CD4-positive, alpha-beta memory T cell (primary cell): ENCODE measurements at regions of chr19 and their contacts with region 1.

Region 1: DNA sequence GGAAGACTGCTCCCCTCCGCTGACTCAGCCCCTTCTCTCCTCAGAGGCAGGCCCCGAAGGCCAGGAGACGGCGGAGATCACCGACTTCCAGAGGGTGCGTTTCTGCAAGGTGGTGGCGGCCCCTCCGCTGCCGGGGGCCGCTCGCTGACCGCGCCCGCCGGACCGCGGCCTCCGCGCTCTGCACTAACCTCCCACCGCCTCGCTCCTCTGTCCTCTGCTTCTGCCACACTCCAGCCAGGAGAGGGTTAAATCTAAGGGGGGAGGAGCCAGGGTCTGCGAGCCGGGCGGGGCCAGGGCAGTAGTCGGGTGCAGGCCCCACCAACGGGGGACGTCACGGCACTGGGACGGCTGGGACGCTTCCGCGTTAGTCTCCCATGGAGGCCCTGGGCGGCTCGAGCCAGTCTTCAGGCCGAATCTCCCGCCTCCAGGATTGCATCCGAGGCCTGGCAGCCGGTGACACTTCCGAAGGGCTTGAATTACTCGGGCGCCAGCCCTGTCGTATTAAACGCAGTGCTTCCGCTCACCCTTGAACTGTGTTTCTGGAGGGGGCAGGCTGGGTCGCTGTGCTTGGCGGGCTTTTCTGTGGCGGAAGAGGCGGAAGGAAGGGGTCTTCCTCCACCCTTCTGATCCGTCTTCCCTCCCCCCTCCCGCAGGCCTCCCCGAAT is 1.2 kb upstream of the INAFM1 start:
- DNase-seq: peak; percentile 87 to 92 (median 89)
- H3K4me3 ChIP-seq: peak overlapping the region; percentile 89 to 100
- H3K4me3 Mint-ChIP-seq: peak overlapping the region; percentile 92 to 99 (median 97)
- H3K27ac ChIP-seq: peak overlapping the region; percentile 96
- H3K27ac Mint-ChIP-seq: peak overlapping the region; percentile 97 to 99 (median 99)
- H3K4me1 ChIP-seq: peaks cover 19% of the 10 kb centered on the region
- H3K4me1 Mint-ChIP-seq: peaks cover 15 to 33% (median 19%) of the 10 kb centered on the region in 4 donors
- H3K27me3 ChIP-seq: no peaks in the 10 kb centered on the region
- H3K27me3 Mint-ChIP-seq: no peaks in the 10 kb centered on the region

Region 2: DNA sequence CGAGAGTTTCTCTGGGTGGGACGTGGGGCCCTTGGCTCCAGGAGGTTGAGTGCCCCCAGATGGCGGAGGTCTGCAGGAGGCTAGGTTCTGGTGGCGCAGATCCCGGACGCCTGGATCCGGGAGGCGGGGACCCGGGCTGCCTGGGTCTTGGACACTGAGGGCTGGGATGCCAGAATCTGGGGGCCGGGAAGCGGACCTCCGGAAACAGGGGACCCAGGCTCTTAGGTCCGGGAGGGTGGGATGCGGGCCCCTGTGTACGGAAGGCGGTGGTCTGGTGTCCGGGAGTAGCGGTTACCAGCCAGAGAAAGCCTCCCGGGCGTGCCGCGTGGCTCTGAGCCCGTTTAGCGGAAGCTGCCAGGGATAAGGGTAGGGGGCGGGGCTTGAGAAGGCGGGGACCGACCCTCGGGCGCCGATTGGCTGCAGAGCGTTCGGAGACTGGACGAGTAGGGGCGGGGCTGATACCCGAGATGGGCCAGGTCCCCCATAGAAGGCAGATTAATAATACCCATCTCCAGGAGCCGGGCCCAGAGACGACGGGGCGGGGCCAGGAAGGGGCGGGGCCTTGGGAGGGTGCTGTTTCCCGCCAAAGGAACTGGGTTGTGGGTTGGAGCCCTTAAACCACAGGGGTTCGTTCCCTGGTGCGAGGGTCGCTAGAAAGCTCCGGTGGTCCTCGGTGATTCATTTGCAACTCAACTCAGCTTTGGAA is 485.0 kb before region 1 on chr19 and contains the start of gene SLC1A5:
- CTCF ChIA-PET with region 1: no interaction called
- POLR2A ChIA-PET with region 1: interaction called, 3 read pairs
- intact Hi-C with region 1: loop called (anchors 1 kb)
- DNase-seq: peak; percentile 95 to 97 (median 95)
- H3K4me3 ChIP-seq: peak within 1 kb of the TSS; percentile 78 to 90
- H3K4me3 Mint-ChIP-seq: peak within 1 kb of the TSS; percentile 89 to 97 (median 92)
- H3K27ac ChIP-seq: peak within 1 kb of the TSS; percentile 75
- H3K27ac Mint-ChIP-seq: peak within 1 kb of the TSS; percentile 80 to 99 (median 90)
- H3K4me1 ChIP-seq: peaks cover 61% of the 10 kb centered on the region
- H3K4me1 Mint-ChIP-seq: peaks cover 42 to 78% (median 56%) of the 10 kb centered on the region in 4 donors
- H3K27me3 ChIP-seq: no peaks in the 10 kb centered on the region
- H3K27me3 Mint-ChIP-seq: no peaks in the 10 kb centered on the region
- total RNA-seq, gene SLC1A5: 20.3 TPM

Region 3: GRCh38 chr19:47081111-47081510 is 192.3 kb before region 1 on chr19:
- CTCF ChIA-PET with region 1: no interaction called
- POLR2A ChIA-PET with region 1: no interaction called
- intact Hi-C with region 1: no loop called
- DNase-seq: no peak
- H3K4me3 ChIP-seq: no peak overlapping the region
- H3K4me3 Mint-ChIP-seq: no peak overlapping the region
- H3K27ac ChIP-seq: no peak overlapping the region
- H3K27ac Mint-ChIP-seq: peak overlapping the region in 1 of 7 donors; percentile 24
- H3K4me1 ChIP-seq: no peaks in the 10 kb centered on the region
- H3K4me1 Mint-ChIP-seq: peaks cover 0 to 4% (median 0%) of the 10 kb centered on the region in 4 donors
- H3K27me3 ChIP-seq: no peaks in the 10 kb centered on the region
- H3K27me3 Mint-ChIP-seq: no peaks in the 10 kb centered on the region

Region 4: GRCh38 chr19:47179653-47180310 is 93.7 kb before region 1 on chr19:
- CTCF ChIA-PET with region 1: no interaction called
- POLR2A ChIA-PET with region 1: no interaction called
- intact Hi-C with region 1: no loop called
- DNase-seq: no peak
- H3K4me3 ChIP-seq: no peak overlapping the region
- H3K4me3 Mint-ChIP-seq: peak overlapping the region in 4 of 8 donors; percentile 15 to 31 (median 25)
- H3K27ac ChIP-seq: no peak overlapping the region
- H3K27ac Mint-ChIP-seq: peak overlapping the region; percentile 48 to 91 (median 70)
- H3K4me1 ChIP-seq: peaks cover 84% of the 10 kb centered on the region
- H3K4me1 Mint-ChIP-seq: peaks cover 52 to 91% (median 68%) of the 10 kb centered on the region in 4 donors
- H3K27me3 ChIP-seq: no peaks in the 10 kb centered on the region
- H3K27me3 Mint-ChIP-seq: no peaks in the 10 kb centered on the region

Region 5: GRCh38 chr19:47225746-47226425 is 47.6 kb before region 1 on chr19:
- CTCF ChIA-PET with region 1: no interaction called
- POLR2A ChIA-PET with region 1: interaction called, 19 read pairs
- intact Hi-C with region 1: loop called (anchors 2 kb)
- DNase-seq: peak; percentile 83 to 87 (median 84)
- H3K4me3 ChIP-seq: peak overlapping the region in 1 of 2 donors; percentile 52
- H3K4me3 Mint-ChIP-seq: peak overlapping the region; percentile 22 to 79 (median 64)
- H3K27ac ChIP-seq: peak overlapping the region; percentile 80
- H3K27ac Mint-ChIP-seq: peak overlapping the region; percentile 74 to 96 (median 89)
- H3K4me1 ChIP-seq: peaks cover 41% of the 10 kb centered on the region
- H3K4me1 Mint-ChIP-seq: peaks cover 5 to 20% (median 11%) of the 10 kb centered on the region in 4 donors
- H3K27me3 ChIP-seq: no peaks in the 10 kb centered on the region
- H3K27me3 Mint-ChIP-seq: no peaks in the 10 kb centered on the region

Region 6: DNA sequence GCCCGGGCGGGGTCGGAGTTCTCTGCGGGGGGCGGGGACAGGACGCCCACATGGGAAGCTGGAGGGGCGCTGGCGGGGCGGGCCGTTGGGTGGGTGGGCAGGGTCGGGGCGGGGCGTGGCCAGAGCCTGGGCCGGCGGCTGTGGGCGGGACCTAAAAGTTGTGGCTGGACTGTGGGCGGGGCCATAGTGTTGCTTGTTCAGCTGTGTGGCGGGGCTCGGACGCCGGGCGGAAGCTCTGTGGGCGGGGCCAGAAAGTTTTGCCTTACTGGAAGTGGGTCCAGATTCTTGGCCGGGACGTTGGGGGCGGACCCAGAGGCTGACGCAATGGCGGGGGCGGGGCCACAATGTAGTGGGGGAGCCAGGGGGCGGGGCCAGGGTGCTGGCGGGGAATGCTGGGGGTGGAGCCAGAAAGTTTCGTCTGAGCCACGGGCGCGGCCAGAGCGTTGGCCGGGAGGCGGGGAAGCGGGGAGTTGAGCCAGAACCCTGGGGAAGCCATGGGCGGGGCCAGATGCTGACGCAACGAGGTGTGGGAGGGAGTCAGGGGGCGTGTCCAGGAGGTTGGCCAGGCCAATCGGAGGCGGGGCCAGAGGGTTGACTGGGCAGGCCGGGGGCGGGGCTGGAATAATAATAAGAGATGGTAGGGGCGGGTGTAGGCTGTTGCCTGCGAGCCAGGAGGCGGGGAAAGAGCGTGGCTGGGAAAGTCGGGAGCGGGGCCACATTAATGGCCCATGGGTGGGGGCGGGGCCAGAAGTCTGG is 16.6 kb before region 1 on chr19:
- CTCF ChIA-PET with region 1: interaction called, 3 read pairs
- POLR2A ChIA-PET with region 1: interaction called, 120 read pairs
- intact Hi-C with region 1: loop called (anchors 1 kb)
- DNase-seq: peak; percentile 97 to 99 (median 98)
- H3K4me3 ChIP-seq: peak overlapping the region; percentile 61 to 62
- H3K4me3 Mint-ChIP-seq: peak overlapping the region; percentile 88 to 98 (median 94)
- H3K27ac ChIP-seq: peak overlapping the region; percentile 76
- H3K27ac Mint-ChIP-seq: peak overlapping the region; percentile 94 to 99 (median 99)
- H3K4me1 ChIP-seq: peaks cover 18% of the 10 kb centered on the region
- H3K4me1 Mint-ChIP-seq: peaks cover 20 to 44% (median 31%) of the 10 kb centered on the region in 4 donors
- H3K27me3 ChIP-seq: no peaks in the 10 kb centered on the region
- H3K27me3 Mint-ChIP-seq: no peaks in the 10 kb centered on the region

Region 7: DNA sequence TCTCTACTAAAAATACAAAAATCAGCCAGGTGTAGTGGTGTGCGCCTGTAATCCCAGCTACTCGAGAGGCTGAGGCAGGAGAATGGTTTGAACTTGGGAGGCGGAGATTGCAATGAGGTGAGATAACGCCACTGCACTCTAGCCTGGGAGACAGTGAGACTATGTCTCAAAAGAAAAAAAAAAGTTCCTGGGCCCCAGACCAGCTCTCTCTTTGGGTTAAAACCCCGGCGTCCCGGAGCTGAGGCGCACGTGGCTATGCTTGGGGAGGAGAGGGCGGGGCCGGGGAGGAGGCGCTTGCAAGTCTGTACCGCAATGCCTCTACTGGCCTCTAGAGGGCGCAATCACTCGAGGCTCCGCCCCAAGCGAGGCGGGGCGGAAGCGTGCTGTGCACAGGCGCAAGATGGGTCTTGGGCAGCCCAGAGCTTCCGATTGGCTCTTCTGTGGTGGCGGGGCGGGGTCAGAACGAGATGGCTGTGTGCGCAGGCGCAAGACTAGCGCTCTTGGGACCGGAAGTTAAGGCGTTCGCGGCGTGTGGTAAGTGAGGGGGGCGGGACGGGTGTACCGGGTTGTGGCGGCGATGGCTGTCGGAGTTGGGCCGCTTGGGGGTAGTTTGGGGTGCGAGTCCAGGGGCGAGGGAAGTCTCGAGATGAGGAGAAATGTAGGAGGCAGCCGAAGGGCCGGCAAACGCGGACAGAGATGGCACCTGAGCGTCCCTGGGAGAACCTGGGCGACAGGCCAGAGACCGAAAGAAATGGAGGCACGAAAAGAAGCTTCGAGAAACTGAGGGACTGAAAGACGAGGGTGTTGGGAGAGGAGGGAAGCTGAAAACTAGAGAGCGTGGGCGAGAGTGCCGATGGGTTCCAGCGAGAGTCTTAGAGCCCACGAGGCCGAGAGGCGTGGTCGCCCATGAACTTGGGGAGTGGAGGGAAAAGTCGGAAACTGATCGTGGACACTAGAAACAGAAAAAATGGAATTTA is 75.7 kb after region 1 on chr19 and contains the start of gene DHX34:
- CTCF ChIA-PET with region 1: interaction called, 3 read pairs
- POLR2A ChIA-PET with region 1: interaction called, 21 read pairs
- intact Hi-C with region 1: loop called (anchors 1 kb)
- DNase-seq: peak; percentile 99 to 100 (median 99)
- H3K4me3 ChIP-seq: peak within 1 kb of the TSS; percentile 67 to 70
- H3K4me3 Mint-ChIP-seq: peak within 1 kb of the TSS; percentile 88 to 99 (median 98)
- H3K27ac ChIP-seq: peak within 1 kb of the TSS; percentile 80
- H3K27ac Mint-ChIP-seq: peak within 1 kb of the TSS; percentile 86 to 99 (median 97)
- H3K4me1 ChIP-seq: peaks cover 27% of the 10 kb centered on the region
- H3K4me1 Mint-ChIP-seq: peaks cover 23 to 48% (median 34%) of the 10 kb centered on the region in 4 donors
- H3K27me3 ChIP-seq: no peaks in the 10 kb centered on the region
- H3K27me3 Mint-ChIP-seq: peaks cover 0 to 2% of the 10 kb centered on the region in 2 donors
- total RNA-seq, gene DHX34: 26.5 to 27.3 TPM

Region 8: GRCh38 chr19:47600246-47601179 is 327.1 kb after region 1 on chr19:
- CTCF ChIA-PET with region 1: no interaction called
- POLR2A ChIA-PET with region 1: no interaction called
- intact Hi-C with region 1: loop called (anchors 1 kb)
- DNase-seq: peak; percentile 96 to 99 (median 98)
- H3K4me3 ChIP-seq: peak overlapping the region; percentile 49 to 67
- H3K4me3 Mint-ChIP-seq: peak overlapping the region; percentile 85 to 90 (median 86)
- H3K27ac ChIP-seq: peak overlapping the region; percentile 74
- H3K27ac Mint-ChIP-seq: peak overlapping the region; percentile 80 to 94 (median 90)
- H3K4me1 ChIP-seq: peaks cover 19% of the 10 kb centered on the region
- H3K4me1 Mint-ChIP-seq: peaks cover 6 to 40% (median 20%) of the 10 kb centered on the region in 4 donors
- H3K27me3 ChIP-seq: no peaks in the 10 kb centered on the region
- H3K27me3 Mint-ChIP-seq: no peaks in the 10 kb centered on the region